ENCODE measurements at regions of chr12 and their contacts with region 1.

Region 1: GRCh38 chr12:84874125-84874824 is 38.3 kb downstream of the SLC6A15 start:
- DNase-seq: peak; percentile 69
- H3K4me3 Mint-ChIP-seq: no peak overlapping the region
- H3K27ac Mint-ChIP-seq: no peak overlapping the region
- H3K4me1 Mint-ChIP-seq: no peaks in the 10 kb centered on the region
- H3K27me3 Mint-ChIP-seq: no peaks in the 10 kb centered on the region
- CTCF ChIP-seq: peak; percentile 63

Region 2: GRCh38 chr12:84463741-84464495 is 410.4 kb before region 1 on chr12:
- CTCF ChIA-PET with region 1: no interaction called
- POLR2A ChIA-PET with region 1: no interaction called
- intact Hi-C with region 1: no loop called
- DNase-seq: no peak
- H3K4me3 Mint-ChIP-seq: no peak overlapping the region
- H3K27ac Mint-ChIP-seq: no peak overlapping the region
- H3K4me1 Mint-ChIP-seq: no peaks in the 10 kb centered on the region
- H3K27me3 Mint-ChIP-seq: no peaks in the 10 kb centered on the region
- CTCF ChIP-seq: no peak

Region 3: GRCh38 chr12:84891106-84891838 is 17.0 kb after region 1 on chr12:
- CTCF ChIA-PET with region 1: interaction called, 16 read pairs
- POLR2A ChIA-PET with region 1: no interaction called
- intact Hi-C with region 1: no loop called
- DNase-seq: no peak
- H3K4me3 Mint-ChIP-seq: no peak overlapping the region
- H3K27ac Mint-ChIP-seq: no peak overlapping the region
- H3K4me1 Mint-ChIP-seq: no peaks in the 10 kb centered on the region
- H3K27me3 Mint-ChIP-seq: no peaks in the 10 kb centered on the region
- CTCF ChIP-seq: no peak

Region 4: DNA sequence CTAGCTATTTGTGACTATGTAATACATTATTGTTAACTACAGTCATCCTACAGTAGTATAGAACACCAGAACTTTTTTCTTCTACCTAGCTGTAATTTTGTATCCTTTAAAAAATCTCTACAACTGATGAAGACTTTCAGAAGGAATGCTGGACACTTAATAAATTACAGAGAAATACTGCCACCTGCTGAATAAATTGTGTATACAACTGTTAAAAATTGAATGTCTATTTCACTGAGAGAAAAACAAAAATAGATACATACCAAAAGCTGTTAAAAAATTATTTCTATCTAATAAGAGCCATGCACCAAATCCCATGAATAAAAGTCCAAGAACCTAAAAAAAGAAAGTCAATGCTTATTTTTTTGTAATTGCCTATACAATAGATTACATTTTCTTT is 155.2 kb after region 1 on chr12:
- CTCF ChIA-PET with region 1: interaction called, 282 read pairs
- POLR2A ChIA-PET with region 1: interaction called, 16 read pairs
- intact Hi-C with region 1: loop called (anchors 1 kb)
- DNase-seq: peak; percentile 44
- H3K4me3 Mint-ChIP-seq: no peak overlapping the region
- H3K27ac Mint-ChIP-seq: no peak overlapping the region
- H3K4me1 Mint-ChIP-seq: no peaks in the 10 kb centered on the region
- H3K27me3 Mint-ChIP-seq: no peaks in the 10 kb centered on the region
- CTCF ChIP-seq: peak; percentile 43

Region 5: DNA sequence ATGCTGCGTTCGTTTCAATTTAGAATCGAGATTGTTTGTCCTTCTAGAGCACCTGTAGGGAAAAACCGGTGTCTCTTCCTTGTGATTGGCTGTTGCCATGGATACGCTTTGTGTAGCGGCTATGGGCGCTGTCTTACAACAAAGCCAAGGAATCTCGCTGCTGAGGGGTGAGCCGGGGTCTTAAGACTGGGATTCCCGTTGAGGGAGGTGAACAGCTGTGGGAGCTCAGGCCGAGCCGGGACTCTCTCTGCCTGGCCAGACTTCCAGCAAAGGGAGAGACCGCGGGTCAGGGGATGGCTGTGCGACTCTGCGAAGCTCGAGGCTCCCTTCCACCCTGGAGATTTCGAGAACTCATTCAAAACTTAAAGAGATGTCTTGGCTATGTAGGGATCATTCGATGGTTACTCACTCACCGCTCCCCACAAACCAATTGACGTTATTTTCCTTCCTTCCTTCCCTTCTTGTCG is 162.0 kb after region 1 on chr12 and contains the starts of genes LRRIQ1 and TSPAN19:
- CTCF ChIA-PET with region 1: interaction called, 282 read pairs
- POLR2A ChIA-PET with region 1: interaction called, 4 read pairs
- intact Hi-C with region 1: no loop called
- DNase-seq: peak; percentile 93
- H3K4me3 Mint-ChIP-seq: peak within 1 kb of the TSS; percentile 92
- H3K27ac Mint-ChIP-seq: peak within 1 kb of the TSS; percentile 88
- H3K4me1 Mint-ChIP-seq: no peaks in the 10 kb centered on the region
- H3K27me3 Mint-ChIP-seq: peaks cover 11% of the 10 kb centered on the region
- CTCF ChIP-seq: no peak
- total RNA-seq, gene LRRIQ1: 0.70 and 1.5 TPM in 2 replicates
- total RNA-seq, gene TSPAN19: 0.63 and 1.1 TPM in 2 replicates

Region 6: GRCh38 chr12:85057370-85057963 is 183.2 kb after region 1 on chr12:
- CTCF ChIA-PET with region 1: interaction called, 8 read pairs
- POLR2A ChIA-PET with region 1: interaction called, 3 read pairs
- intact Hi-C with region 1: loop called (anchors 1 kb)
- DNase-seq: peak; percentile 70
- H3K4me3 Mint-ChIP-seq: no peak overlapping the region
- H3K27ac Mint-ChIP-seq: no peak overlapping the region
- H3K4me1 Mint-ChIP-seq: peaks cover 6% of the 10 kb centered on the region
- H3K27me3 Mint-ChIP-seq: no peaks in the 10 kb centered on the region
- CTCF ChIP-seq: peak; percentile 71

Region 7: DNA sequence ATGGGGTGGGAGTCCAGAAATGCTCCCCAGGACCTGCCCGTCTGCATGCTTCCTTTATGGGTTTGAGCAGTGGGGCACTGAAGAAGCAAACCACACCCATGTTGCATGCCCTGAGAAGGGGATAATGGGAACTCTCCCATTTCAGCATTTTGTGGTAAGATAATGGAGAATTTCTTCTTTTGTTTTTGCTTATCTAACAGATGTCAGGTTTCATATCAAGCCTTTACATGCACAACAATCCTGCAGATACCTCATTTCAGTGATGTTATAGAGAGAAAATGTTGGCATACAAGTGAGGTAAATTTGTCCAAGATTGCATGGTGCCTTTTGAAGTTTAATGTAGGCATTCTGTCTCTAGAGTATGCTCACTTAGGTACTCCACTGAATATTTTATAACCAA is 582.7 kb after region 1 on chr12:
- CTCF ChIA-PET with region 1: no interaction called
- POLR2A ChIA-PET with region 1: no interaction called
- intact Hi-C with region 1: loop called (anchors 10 kb)
- DNase-seq: no peak
- H3K4me3 Mint-ChIP-seq: no peak overlapping the region
- H3K27ac Mint-ChIP-seq: no peak overlapping the region
- H3K4me1 Mint-ChIP-seq: peaks cover 5% of the 10 kb centered on the region
- H3K27me3 Mint-ChIP-seq: no peaks in the 10 kb centered on the region
- CTCF ChIP-seq: no peak

Measured in MCF 10A (cell line).